A673 (cell line): ENCODE measurements at regions of chr13 and their contacts with region 1.

Region 1: GRCh38 chr13:30306762-30307193 is 573 bp downstream of the KATNAL1 start:
- DNase-seq: peak; percentile 97
- H3K4me3 ChIP-seq: peak overlapping the region; percentile 87
- H3K27ac ChIP-seq: peak overlapping the region; percentile 97
- H3K4me1 ChIP-seq: peaks cover 56% of the 10 kb centered on the region
- H3K27me3 ChIP-seq: no peaks in the 10 kb centered on the region
- CTCF ChIP-seq: no peak

Region 2: DNA sequence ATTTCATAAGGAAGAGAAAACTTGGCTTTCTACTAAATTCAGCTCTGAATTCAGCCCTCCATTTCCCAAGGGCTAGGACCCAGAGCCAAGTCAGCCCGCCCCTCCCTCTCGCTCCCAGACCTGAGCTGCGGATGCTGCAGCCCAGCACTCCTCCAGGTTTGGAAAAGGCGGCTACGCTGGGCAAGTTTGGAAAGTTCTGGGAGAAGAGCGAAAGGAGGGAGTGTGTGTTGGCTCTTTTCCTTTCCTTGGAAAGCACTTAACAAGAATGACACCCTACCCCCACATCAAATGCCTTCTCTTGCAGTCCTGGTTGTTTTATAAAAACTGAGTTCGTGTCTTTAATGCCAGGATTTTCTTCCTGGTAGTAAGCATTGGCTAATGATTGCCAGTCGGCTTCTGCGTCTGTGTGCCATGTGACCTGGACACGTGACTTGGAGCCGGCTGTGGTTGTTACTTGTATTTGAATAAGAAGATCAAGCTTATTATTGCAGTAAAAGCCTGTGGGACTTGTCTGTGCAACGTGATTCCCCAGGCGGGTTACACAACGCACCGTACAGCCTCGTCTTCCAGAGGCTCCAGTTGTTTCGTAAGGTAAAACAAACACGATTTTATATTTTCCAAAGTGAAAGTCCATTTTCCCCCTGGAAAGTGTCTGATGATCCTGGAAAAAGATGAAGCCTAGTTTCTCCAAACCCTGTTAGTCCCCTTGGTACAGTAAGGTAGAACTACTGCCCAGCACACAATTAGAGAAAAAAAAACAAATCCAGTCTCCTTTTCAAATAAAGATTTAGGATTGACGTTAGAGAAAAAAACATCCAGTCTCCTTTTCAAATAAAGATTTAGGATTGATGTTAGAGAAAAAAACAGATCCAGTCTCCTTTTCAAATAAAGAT is 88.7 kb after region 1 on chr13:
- CTCF ChIA-PET with region 1: no interaction called
- POLR2A ChIA-PET with region 1: interaction called, 4 read pairs
- intact Hi-C with region 1: loop called (anchors 5 kb)
- DNase-seq: peak; percentile 91
- H3K4me3 ChIP-seq: peak overlapping the region; percentile 44
- H3K27ac ChIP-seq: peak overlapping the region; percentile 80
- H3K4me1 ChIP-seq: peaks cover 14% of the 10 kb centered on the region
- H3K27me3 ChIP-seq: no peaks in the 10 kb centered on the region
- CTCF ChIP-seq: no peak